ENCODE measurements at regions of chr9 and their contacts with region 1.

Region 1: DNA sequence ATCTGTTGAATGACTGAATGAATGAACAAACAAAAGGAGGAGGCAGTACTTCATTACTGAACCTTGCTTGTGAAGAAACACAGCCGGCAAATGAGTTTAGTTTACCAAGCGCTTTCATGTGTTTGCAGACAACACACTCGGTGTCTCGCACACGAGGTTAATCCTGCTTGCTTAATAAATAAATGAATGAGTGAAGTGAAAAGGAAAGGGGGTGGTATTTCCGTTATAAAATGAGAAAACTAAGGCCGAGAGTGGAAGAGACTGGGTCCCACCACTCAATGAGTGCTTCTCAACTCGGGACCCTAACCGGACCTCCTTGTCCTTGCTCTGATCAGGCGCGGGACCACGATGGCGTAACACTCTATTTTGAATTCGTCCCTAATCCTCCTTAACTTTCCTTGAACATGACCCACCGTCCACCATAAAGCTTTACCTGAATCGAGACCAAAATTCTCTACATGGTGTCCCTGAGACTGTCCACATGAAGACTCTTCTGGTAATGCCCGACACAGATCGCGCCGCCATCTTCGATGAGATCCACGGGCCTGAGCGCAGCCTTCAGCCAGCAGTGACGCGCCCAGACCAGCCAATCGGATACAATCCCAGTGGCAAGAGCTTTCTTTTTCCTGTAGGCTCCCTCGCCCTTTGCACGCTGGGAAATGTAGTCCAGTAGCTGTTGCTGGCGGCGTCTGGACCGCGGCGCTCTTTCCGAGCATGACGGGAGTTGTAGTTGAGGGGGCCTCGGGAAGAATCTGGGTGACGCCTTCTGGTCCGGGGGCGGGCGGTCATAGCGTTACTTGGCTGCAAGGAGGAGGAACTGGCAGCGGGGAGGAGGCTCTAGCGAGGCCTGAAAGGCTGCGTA is at the starts of genes MRPL50 and ZNF189:
- DNase-seq: peak; percentile 100
- ATAC-seq: peak; percentile 99
- H3K4me3 ChIP-seq: peak within 1 kb of the TSS; percentile 82 to 90 (median 86)
- H3K27ac ChIP-seq: peak within 1 kb of the TSS; percentile 85
- H3K4me1 ChIP-seq: peaks cover 74% of the 10 kb centered on the region
- H3K27me3 ChIP-seq: no peaks in the 10 kb centered on the region; a peak in 1 of 5 replicates
- CTCF ChIP-seq: 0 out of 2 replicates have a peak, but pooled peaks have one; percentile 32
- EP300 ChIP-seq: peak in 1 of 2 experiments; percentile 48; a peak in 1 of 4 replicates
- POLR2A ChIP-seq: peak; percentile 85 to 98
- RAD21 ChIP-seq: peak; percentile 57
- total RNA-seq, gene MRPL50: 70.0 and 107 TPM in 2 replicates
- total RNA-seq, gene ZNF189: 50.0 and 65.4 TPM in 2 replicates

Region 2: DNA sequence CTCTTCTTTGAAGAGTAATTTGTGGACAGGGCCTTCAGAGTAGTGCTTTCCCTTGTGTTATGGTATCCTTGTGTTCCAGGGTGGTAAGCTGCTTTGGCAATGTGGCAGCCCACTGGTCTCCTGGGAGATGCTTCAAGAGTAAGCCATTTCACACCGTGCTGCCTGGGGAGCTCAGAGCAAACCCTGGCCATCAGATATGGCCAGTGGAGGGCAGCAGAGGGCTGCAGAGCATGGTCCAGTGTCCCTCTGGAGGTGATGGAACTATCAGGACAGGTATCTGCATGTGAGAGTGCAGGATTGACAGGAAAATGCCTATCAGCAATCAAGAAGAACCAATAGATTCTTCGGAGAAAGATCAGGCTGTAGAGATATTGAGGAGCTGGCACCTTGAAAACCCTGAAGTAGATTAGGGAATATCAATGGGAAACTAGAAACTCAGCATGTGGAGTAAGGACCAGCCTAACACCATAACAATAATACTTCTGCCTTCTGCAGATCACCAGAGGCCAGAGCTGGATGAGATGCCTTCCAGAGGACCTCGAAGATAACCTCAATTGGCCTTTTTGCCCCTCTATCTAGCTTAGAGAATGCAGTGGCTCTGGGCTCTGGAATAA is 279.0 kb before region 1 on chr9:
- CTCF ChIA-PET with region 1: no interaction called
- POLR2A ChIA-PET with region 1: no interaction called
- in situ Hi-C with region 1: loop called (anchors 10 kb)
- intact Hi-C with region 1: no loop called
- DNase-seq: peak; percentile 57
- ATAC-seq: peak; percentile 100
- H3K4me3 ChIP-seq: no peak overlapping the region
- H3K27ac ChIP-seq: no peak overlapping the region
- H3K4me1 ChIP-seq: peaks cover 6% of the 10 kb centered on the region; the same call in 1 of the 2 replicates
- H3K27me3 ChIP-seq: no peaks in the 10 kb centered on the region
- CTCF ChIP-seq: peak; percentile 99
- EP300 ChIP-seq: no peak
- POLR2A ChIP-seq: no peak
- RAD21 ChIP-seq: peak; percentile 95

Region 3: GRCh38 chr9:101354143-101354764 is 44.0 kb before region 1 on chr9:
- CTCF ChIA-PET with region 1: no interaction called
- POLR2A ChIA-PET with region 1: interaction called, 25 read pairs
- in situ Hi-C with region 1: no loop called
- intact Hi-C with region 1: loop called (anchors 1 kb)
- DNase-seq: peak; percentile 100
- ATAC-seq: peak; percentile 92
- H3K4me3 ChIP-seq: peak overlapping the region in 1 of 3 experiments; percentile 17; a peak in 1 of 6 replicates
- H3K27ac ChIP-seq: peak overlapping the region; percentile 94
- H3K4me1 ChIP-seq: peaks cover 95% of the 10 kb centered on the region
- H3K27me3 ChIP-seq: no peaks in the 10 kb centered on the region
- CTCF ChIP-seq: no peak
- EP300 ChIP-seq: peak; percentile 81 to 97
- POLR2A ChIP-seq: no peak
- RAD21 ChIP-seq: no peak; the same call in 1 of the 2 replicates

Region 4: GRCh38 chr9:101381833-101382342 is 16.4 kb before region 1 on chr9:
- CTCF ChIA-PET with region 1: no interaction called
- POLR2A ChIA-PET with region 1: interaction called, 10 read pairs
- in situ Hi-C with region 1: no loop called
- intact Hi-C with region 1: no loop called
- DNase-seq: no peak
- ATAC-seq: no peak
- H3K4me3 ChIP-seq: no peak overlapping the region
- H3K27ac ChIP-seq: no peak overlapping the region
- H3K4me1 ChIP-seq: peaks cover 62% of the 10 kb centered on the region
- H3K27me3 ChIP-seq: no peaks in the 10 kb centered on the region
- CTCF ChIP-seq: no peak
- EP300 ChIP-seq: no peak
- POLR2A ChIP-seq: no peak
- RAD21 ChIP-seq: no peak

Region 5: DNA sequence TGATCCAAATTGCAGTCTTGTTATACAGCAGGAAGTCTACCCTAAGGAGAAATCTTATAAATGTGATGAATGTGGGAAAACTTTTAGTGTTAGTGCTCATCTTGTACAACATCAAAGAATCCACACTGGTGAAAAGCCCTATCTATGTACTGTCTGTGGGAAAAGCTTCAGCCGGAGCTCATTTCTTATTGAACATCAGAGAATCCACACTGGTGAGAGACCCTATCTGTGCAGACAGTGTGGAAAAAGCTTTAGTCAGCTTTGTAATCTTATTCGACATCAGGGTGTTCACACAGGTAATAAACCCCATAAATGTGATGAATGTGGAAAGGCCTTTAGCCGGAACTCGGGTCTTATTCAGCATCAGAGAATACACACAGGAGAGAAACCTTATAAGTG is 10.8 kb after region 1 on chr9:
- CTCF ChIA-PET with region 1: no interaction called
- POLR2A ChIA-PET with region 1: interaction called, 32 read pairs
- in situ Hi-C with region 1: no loop called
- intact Hi-C with region 1: no loop called
- DNase-seq: no peak
- ATAC-seq: no peak
- H3K4me3 ChIP-seq: no peak overlapping the region
- H3K27ac ChIP-seq: no peak overlapping the region
- H3K4me1 ChIP-seq: peaks cover 26% of the 10 kb centered on the region
- H3K27me3 ChIP-seq: no peaks in the 10 kb centered on the region
- CTCF ChIP-seq: no peak
- EP300 ChIP-seq: no peak
- POLR2A ChIP-seq: no peak
- RAD21 ChIP-seq: no peak

Region 6: GRCh38 chr9:101437806-101438232 is 39.5 kb after region 1 on chr9:
- CTCF ChIA-PET with region 1: no interaction called
- POLR2A ChIA-PET with region 1: interaction called, 23 read pairs
- in situ Hi-C with region 1: no loop called
- intact Hi-C with region 1: no loop called
- DNase-seq: peak; percentile 76
- ATAC-seq: peak; percentile 73
- H3K4me3 ChIP-seq: no peak overlapping the region
- H3K27ac ChIP-seq: peak overlapping the region; percentile 34
- H3K4me1 ChIP-seq: peaks cover 97% of the 10 kb centered on the region
- H3K27me3 ChIP-seq: no peaks in the 10 kb centered on the region
- CTCF ChIP-seq: peak; percentile 10; the same call in 1 of the 2 replicates
- EP300 ChIP-seq: no peak
- POLR2A ChIP-seq: no peak
- RAD21 ChIP-seq: no peak

Region 7: GRCh38 chr9:101458955-101459631 is 60.8 kb after region 1 on chr9:
- CTCF ChIA-PET with region 1: no interaction called
- POLR2A ChIA-PET with region 1: interaction called, 8 read pairs
- in situ Hi-C with region 1: loop called (anchors 5 kb)
- intact Hi-C with region 1: loop called (anchors 1 kb)
- DNase-seq: peak; percentile 86
- ATAC-seq: peak; percentile 95
- H3K4me3 ChIP-seq: no peak overlapping the region
- H3K27ac ChIP-seq: no peak overlapping the region
- H3K4me1 ChIP-seq: peaks cover 52% of the 10 kb centered on the region
- H3K27me3 ChIP-seq: no peaks in the 10 kb centered on the region
- CTCF ChIP-seq: peak; percentile 91
- EP300 ChIP-seq: no peak
- POLR2A ChIP-seq: no peak
- RAD21 ChIP-seq: peak; percentile 80

Region 8: GRCh38 chr9:101470021-101470420 is 71.7 kb after region 1 on chr9:
- CTCF ChIA-PET with region 1: no interaction called
- POLR2A ChIA-PET with region 1: no interaction called
- in situ Hi-C with region 1: no loop called
- intact Hi-C with region 1: no loop called
- DNase-seq: no peak
- ATAC-seq: no peak
- H3K4me3 ChIP-seq: no peak overlapping the region
- H3K27ac ChIP-seq: no peak overlapping the region
- H3K4me1 ChIP-seq: peaks cover 7% of the 10 kb centered on the region; the same call in 1 of the 2 replicates
- H3K27me3 ChIP-seq: 0 out of 5 replicates have a peak, but pooled peaks cover 0 to 9% of the 10 kb centered on the region in 2 experiments
- CTCF ChIP-seq: no peak
- EP300 ChIP-seq: no peak
- POLR2A ChIP-seq: no peak
- RAD21 ChIP-seq: no peak

Region 9: GRCh38 chr9:101524371-101524770 is 126.1 kb after region 1 on chr9:
- CTCF ChIA-PET with region 1: no interaction called
- POLR2A ChIA-PET with region 1: no interaction called
- in situ Hi-C with region 1: no loop called
- intact Hi-C with region 1: no loop called
- DNase-seq: no peak
- ATAC-seq: no peak
- H3K4me3 ChIP-seq: no peak overlapping the region
- H3K27ac ChIP-seq: no peak overlapping the region
- H3K4me1 ChIP-seq: no peaks in the 10 kb centered on the region
- H3K27me3 ChIP-seq: peaks cover 0 to 6% of the 10 kb centered on the region in 2 experiments; a peak in 2 of 5 replicates
- CTCF ChIP-seq: no peak
- EP300 ChIP-seq: no peak
- POLR2A ChIP-seq: no peak
- RAD21 ChIP-seq: no peak